Astrocyte of the cerebellum (primary cell): ENCODE measurements at regions of chr13 and their contacts with region 1.

Region 1: DNA sequence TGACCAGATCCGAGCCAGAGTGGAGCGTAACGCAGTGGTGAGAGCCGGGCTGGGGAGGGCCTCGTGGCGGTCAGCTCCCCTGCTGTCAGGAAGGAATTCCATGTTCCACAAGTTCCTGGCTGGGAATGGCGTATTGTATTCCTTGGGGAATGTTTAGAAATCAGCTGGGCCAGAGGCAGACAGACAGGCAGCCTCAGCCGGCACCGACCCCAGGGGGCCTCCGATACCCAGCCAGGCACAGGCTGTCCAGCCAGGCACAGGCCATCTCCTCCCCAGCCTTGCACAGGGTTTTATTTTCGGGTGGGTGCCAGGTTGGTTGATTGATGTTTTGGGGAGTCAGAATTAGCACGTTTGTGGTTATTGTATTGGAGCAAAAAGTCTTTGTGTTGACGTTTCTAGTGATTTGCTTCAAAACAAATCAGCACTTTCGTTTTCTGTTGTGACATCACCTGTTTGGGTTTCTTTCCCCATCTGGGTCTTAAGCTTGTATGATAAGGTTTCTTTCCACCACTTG is 126.6 kb upstream of the MCF2L start:
- DNase-seq: peak; percentile 76
- H3K4me3 ChIP-seq: peak overlapping the region; percentile 18
- CTCF ChIP-seq: no peak

Region 2: DNA sequence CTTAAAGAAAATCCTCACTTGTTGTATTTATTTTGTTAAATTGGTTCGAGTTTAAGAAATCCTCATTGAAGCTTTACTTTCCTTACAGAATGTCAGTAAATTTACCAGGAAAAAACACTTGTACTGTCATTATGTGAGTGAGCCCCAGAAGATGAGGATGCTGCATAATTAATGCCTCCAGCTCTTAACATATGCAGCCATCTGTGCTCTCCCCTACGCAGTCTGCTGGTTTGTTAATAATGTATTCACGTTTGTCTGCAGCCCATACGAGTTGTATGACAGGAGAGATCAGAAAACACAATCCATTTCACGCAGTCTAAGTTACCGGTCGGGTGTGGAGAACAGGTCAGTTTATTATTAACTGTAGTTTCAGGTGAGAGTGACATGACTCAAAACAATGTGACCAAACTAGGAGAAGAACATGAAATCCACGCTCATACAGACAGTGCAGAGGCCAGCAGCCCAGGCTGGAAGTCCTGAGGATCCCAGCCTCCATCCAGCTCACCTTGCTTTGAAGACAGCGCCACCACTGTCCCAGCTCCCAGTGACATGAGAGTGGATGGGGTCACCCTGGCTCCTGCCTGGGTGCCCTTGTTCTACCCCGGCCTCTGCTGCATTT is 172.4 kb before region 1 on chr13:
- in situ Hi-C with region 1: loop called (anchors 5 kb)
- DNase-seq: no peak
- H3K4me3 ChIP-seq: no peak overlapping the region
- CTCF ChIP-seq: no peak

Region 3: DNA sequence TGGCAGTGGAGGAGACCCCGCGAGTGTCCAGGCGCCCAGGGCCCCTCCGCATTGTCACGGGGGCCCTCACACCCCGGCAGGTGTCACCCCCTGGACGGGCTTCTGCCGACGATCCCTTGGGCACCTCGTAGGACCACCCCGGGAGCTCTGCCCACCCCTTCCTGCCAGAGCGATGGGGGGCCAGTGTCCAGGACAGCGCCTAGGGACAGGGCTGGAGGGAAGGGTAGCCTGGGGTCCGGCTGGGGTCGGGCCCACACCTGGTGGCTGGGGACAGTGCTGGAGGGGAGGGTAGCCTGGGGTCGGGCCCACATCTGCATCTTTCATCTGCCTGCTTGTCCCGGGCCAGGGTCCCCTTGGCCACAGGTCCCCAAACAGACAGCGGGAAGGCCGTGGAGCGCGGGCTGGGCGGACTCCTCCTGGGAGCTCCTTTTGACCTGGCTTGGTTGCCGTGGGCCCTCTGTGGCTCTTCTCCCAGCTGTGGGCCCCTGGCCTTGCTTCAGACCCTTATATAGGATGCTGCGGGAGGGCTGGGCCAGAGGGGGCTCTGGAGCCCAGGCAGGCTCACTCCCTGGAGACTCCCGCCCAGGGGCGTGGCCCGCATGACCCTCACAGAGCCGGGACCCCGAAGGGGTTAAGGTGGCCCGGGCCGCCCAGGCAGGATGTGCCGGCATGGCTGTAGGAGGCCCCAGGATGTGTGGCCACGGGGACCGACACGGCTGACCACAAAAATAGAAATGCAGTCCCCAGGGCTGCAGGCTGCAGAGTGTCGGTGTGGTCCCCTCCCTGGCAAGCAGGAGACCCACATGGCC is 52.5 kb after region 1 on chr13:
- in situ Hi-C with region 1: no loop called
- DNase-seq: no peak
- H3K4me3 ChIP-seq: peak overlapping the region; percentile 34
- CTCF ChIP-seq: no peak